Heart left ventricle (tissue), 16 donors: ENCODE measurements at regions of chr6 and their contacts with region 1.

Region 1: GRCh38 chr6:14703586-14703985 is 542.3 kb upstream of the JARID2 start:
- DNase-seq: no peak
- ATAC-seq: no peak
- H3K4me3 ChIP-seq: no peak overlapping the region
- H3K27ac ChIP-seq: no peak overlapping the region
- H3K4me1 ChIP-seq: peaks cover 0 to 38% (median 22%) of the 10 kb centered on the region in 12 donors
- H3K27me3 ChIP-seq: no peaks in the 10 kb centered on the region
- CTCF ChIP-seq: no peak
- POLR2A ChIP-seq: no peak

Region 2: DNA sequence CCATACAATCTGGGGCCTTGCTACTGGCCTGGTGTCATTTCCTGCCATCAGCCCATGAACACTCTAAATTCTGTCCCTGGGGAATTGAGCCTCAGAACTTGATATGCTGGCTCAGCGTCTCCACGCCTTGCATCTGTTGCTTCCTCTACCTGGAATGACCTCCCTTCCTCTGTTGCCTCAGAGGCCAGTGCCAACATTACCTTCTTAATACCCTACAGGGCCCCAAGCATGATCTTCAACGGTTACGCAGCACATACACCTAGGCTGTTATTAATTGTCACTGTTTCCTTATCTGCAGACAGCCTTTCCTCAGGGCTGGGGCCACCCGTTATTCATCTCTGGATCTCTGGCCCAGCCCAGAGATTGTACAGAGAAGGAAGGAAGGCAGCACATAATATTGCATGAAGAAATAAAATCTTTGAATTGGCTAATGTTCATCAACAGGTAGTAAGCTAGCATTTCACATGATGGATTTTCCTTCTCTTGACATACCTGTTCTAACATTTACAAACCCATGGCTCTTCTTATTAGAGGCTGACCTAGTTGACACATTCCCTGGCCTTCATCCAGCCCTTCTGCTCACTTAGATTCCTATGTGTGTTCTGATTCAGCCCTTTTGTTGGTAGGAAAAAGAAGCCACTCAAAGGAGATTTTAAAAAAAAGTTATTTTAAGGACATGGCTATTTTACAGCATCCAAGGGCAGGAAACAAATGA is 787.2 kb before region 1 on chr6:
- intact Hi-C with region 1: no loop called
- DNase-seq: no peak
- ATAC-seq: no peak
- H3K4me3 ChIP-seq: no peak overlapping the region
- H3K27ac ChIP-seq: no peak overlapping the region
- H3K4me1 ChIP-seq: peaks cover 0 to 3% (median 0%) of the 10 kb centered on the region in 12 donors
- H3K27me3 ChIP-seq: peaks cover 0 to 27% (median 5%) of the 10 kb centered on the region in 9 donors
- CTCF ChIP-seq: no peak
- POLR2A ChIP-seq: no peak

Region 3: DNA sequence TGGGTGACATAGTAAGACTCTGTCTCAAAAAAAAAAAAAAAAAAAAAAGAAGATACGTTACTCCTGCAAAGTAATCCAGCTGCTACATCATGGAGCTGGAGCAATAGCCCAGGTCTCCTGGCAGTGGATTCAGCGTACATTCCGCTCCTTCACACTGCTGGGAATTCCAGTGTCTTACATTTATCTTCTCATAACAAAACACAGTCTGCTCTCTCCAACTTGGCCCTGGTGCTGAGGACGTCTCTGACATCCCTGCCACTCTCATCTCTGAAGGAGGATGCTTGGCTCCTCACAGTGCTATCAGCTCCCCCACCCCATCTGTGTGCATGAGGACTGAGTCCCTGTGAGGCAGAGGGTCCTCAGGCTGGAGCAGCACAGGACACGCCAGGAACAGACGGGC is 56.2 kb before region 1 on chr6:
- intact Hi-C with region 1: loop called in 1 of 10 experiments (anchors 5 kb)
- DNase-seq: no peak
- ATAC-seq: peak in 2 of 4 donors; percentile 18 to 38
- H3K4me3 ChIP-seq: no peak overlapping the region
- H3K27ac ChIP-seq: no peak overlapping the region
- H3K4me1 ChIP-seq: no peaks in the 10 kb centered on the region
- H3K27me3 ChIP-seq: no peaks in the 10 kb centered on the region
- CTCF ChIP-seq: no peak
- POLR2A ChIP-seq: no peak

Region 4: DNA sequence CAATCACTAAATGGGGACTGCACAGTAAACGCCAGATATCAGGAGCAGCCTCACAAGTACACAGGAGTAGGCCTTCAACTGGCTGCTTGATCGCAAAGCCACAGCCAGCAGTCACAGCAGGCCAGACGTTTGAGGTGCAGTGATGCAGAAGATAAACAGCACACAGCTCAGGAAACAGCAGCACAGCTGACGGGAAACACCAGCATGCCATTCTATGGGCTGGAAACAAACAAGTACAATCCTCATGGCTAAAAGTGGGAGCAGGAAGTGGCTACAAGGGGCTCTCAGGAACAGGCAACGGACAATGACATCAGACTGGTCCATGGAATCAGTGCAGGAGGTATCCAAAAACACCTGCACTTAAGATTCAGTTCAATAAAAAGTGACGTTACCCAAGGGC is 848.2 kb after region 1 on chr6:
- intact Hi-C with region 1: no loop called
- DNase-seq: peak in 3 of 5 donors; percentile 18 to 29 (median 28)
- ATAC-seq: peak; percentile 47 to 81 (median 61)
- H3K4me3 ChIP-seq: no peak overlapping the region
- H3K27ac ChIP-seq: peak overlapping the region in 6 of 12 donors; percentile 10 to 43 (median 38)
- H3K4me1 ChIP-seq: peaks cover 0 to 64% (median 25%) of the 10 kb centered on the region in 12 donors
- H3K27me3 ChIP-seq: no peaks in the 10 kb centered on the region
- CTCF ChIP-seq: no peak
- POLR2A ChIP-seq: no peak